ENCODE measurements at regions of chr7 and their contacts with region 1.

Region 1: GRCh38 chr7:33886149-33886623 is 19.2 kb upstream of the BMPER start:
- DNase-seq: peak; percentile 38
- H3K4me3 ChIP-seq: no peak overlapping the region
- H3K27ac ChIP-seq: no peak overlapping the region
- H3K4me1 ChIP-seq: no peaks in the 10 kb centered on the region; a peak in 2 of 4 replicates
- H3K27me3 ChIP-seq: no peaks in the 10 kb centered on the region
- CTCF ChIP-seq: peak; percentile 67
- EP300 ChIP-seq: no peak
- RAD21 ChIP-seq: peak; percentile 35; the same call in 1 of the 2 replicates

Region 2: DNA sequence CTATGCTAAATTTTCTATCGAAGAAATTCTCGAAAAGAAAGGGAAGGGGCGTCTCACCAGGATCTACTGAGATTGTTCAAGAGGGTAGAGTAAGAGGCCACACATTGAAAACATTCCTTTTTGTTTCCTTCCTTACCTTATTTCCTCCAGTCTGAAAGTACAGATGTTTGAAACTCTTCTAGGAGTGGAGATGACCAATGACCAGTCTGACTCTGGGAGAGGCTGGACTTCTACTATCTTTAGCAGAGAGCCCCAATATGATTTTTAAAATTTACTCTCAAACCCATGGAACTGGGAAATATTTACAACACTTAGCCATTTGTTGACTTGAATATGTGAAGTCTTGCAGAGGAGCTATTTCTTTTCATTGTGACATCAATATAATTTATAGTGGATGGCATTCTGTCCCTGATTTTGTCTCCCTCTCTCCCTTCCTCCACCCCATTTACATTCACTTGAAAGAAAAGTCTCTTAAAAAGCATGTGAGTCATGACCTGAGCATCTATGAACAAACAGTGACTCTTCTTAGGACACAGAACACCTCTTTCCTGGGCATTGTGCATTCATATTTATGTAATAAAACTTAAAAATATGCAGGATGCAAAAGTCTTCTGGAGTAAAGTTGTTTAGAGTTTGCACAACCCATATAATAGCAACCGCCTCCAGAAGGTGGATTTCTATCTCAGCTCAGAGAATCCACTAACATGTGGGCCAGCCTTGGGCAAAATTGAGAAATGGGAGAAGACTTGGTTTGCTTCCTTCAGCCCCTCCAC is 12.0 kb before region 1 on chr7:
- CTCF ChIA-PET with region 1: interaction called, 11 read pairs
- POLR2A ChIA-PET with region 1: no interaction called
- DNase-seq: no peak
- H3K4me3 ChIP-seq: no peak overlapping the region; a peak in 1 of 4 replicates
- H3K27ac ChIP-seq: peak overlapping the region in 1 of 2 experiments; percentile 65; a peak in 2 of 4 replicates
- H3K4me1 ChIP-seq: peaks cover 0 to 26% of the 10 kb centered on the region in 2 experiments; a peak in 2 of 4 replicates
- H3K27me3 ChIP-seq: no peaks in the 10 kb centered on the region
- CTCF ChIP-seq: no peak
- EP300 ChIP-seq: peak in 1 of 2 experiments; percentile 77; a peak in 1 of 4 replicates
- RAD21 ChIP-seq: no peak

Region 3: GRCh38 chr7:33904681-33905388 is 18.6 kb after region 1 on chr7:
- CTCF ChIA-PET with region 1: interaction called, 10 read pairs
- POLR2A ChIA-PET with region 1: no interaction called
- DNase-seq: peak; percentile 84
- H3K4me3 ChIP-seq: peak overlapping the region; percentile 80 to 86
- H3K27ac ChIP-seq: peak overlapping the region in 1 of 2 experiments; percentile 66; a peak in 2 of 4 replicates
- H3K4me1 ChIP-seq: peaks cover 17 to 21% of the 10 kb centered on the region in 2 experiments; a peak in 3 of 4 replicates
- H3K27me3 ChIP-seq: no peaks in the 10 kb centered on the region
- CTCF ChIP-seq: peak; percentile 45
- EP300 ChIP-seq: peak in 1 of 2 experiments; percentile 27; a peak in 1 of 4 replicates
- RAD21 ChIP-seq: no peak